Activated CD4-positive, alpha-beta T cell treated with anti-CD3 and anti-CD28 coated beads, Interleukin-2, amount 10 ng/mL, durations not matched to agents 24 days and 14 days (primary cell): ENCODE measurements at regions of chr1 and their contacts with region 1.

Region 1: DNA sequence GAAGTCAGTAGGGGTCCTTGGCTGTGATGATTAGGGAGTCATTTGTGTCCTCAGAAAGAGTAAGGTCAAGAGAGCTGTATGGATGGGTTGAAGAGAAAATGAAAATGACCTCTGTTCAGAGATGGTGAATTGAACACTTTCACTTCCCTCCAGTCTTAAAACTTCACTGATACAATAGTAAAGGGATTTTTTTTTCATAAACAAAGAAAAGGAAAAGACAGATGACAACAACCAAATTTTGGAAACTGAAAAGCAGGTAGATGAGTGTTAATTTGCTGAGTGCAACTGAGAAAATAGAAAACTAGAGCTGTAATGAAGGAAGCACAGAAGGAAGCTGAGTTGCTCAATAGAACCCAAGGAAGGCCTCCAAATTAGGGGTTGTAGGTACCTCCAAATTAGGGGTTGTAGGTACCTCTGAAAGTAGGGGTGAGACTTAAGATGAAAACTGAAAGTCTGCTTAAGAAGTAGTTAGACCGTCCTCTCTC is 14.8 kb upstream of the S1PR1 start:
- DNase-seq: no peak
- H3K4me3 Mint-ChIP-seq: peak overlapping the region; percentile 61
- H3K27ac Mint-ChIP-seq: peak overlapping the region; percentile 83
- H3K4me1 Mint-ChIP-seq: peaks cover 26% of the 10 kb centered on the region
- H3K27me3 Mint-ChIP-seq: no peaks in the 10 kb centered on the region

Region 2: DNA sequence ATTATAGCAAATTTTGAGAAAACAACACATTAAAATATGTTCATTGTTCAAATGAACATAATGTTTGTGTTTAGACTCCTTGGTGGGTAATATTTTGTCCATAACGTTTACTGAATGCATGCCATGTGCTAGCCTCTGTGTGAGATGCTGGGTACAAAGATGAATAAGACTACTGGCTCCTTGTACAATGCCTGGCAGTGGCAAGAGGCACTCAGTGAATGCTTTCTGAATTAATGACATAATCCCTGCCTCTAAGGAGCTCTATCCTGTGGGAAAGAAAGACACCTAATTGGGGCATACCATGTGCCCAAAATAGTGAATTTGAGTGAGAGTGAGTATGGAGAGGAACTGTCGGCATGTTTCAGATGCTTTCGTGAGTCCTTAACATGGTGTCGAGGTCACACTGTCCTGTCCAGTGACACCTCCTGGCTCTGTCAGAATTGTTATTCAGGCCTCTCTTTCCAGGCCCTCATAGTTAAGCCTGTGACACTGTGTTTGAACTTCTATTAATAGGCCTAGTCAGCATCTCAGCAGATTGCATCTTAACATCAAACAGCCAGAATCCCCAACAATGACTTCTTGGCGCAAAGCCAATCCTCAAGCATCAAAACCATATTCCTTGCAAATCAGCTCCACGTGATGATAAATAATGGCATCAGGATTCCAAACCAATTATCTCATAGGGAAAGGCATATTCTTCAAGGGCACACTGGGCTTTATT is 18.0 kb before region 1 on chr1:
- intact Hi-C with region 1: loop called (anchors 1 kb)
- DNase-seq: no peak
- H3K4me3 Mint-ChIP-seq: no peak overlapping the region
- H3K27ac Mint-ChIP-seq: no peak overlapping the region
- H3K4me1 Mint-ChIP-seq: peaks cover 25% of the 10 kb centered on the region
- H3K27me3 Mint-ChIP-seq: no peaks in the 10 kb centered on the region